Activated CD4-positive, alpha-beta T cell treated with anti-CD3 and anti-CD28 coated beads, Interleukin-2, amount 10 ng/mL, durations not matched to agents 24 days and 14 days (primary cell): ENCODE measurements at regions of chr19 and their contacts with region 1.

Region 1: DNA sequence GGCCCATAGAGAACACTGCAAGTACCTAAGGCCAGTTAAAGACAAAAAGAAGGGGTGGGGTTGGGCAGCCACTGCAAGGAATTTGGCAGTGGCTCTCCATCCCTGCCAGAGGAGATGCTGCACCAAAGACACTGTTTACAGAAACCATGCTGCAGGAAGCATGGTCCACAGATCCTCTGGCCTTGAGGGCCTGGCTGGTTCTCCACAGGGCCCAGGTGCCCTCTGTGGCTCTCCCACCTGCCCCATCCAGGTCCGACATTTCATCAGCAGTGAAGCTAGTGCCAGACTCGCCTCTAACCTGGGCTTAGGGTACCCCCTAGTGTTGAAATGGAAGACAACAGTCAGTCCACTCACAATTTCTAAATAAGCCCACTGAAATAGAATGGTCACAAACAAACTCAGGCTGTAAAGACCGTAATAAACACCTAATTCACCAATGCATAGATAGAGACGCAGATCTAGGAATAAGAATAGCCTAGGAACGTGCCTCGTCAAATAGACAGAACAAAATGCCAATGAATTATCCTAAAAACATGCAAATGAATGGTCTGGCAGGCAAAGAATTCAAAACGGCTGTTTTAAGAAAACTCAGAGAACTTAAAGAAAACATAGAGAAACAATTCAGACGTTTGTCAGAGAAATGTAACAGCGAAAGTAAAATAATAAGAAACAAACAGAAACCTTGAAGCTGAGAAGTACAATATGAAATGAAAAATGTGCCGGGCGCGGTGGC is 23.3 kb downstream of the LYPD4 start:
- DNase-seq: peak; percentile 90
- H3K4me3 Mint-ChIP-seq: no peak overlapping the region
- H3K27ac Mint-ChIP-seq: no peak overlapping the region
- H3K4me1 Mint-ChIP-seq: no peaks in the 10 kb centered on the region
- H3K27me3 Mint-ChIP-seq: peaks cover 35% of the 10 kb centered on the region

Region 2: DNA sequence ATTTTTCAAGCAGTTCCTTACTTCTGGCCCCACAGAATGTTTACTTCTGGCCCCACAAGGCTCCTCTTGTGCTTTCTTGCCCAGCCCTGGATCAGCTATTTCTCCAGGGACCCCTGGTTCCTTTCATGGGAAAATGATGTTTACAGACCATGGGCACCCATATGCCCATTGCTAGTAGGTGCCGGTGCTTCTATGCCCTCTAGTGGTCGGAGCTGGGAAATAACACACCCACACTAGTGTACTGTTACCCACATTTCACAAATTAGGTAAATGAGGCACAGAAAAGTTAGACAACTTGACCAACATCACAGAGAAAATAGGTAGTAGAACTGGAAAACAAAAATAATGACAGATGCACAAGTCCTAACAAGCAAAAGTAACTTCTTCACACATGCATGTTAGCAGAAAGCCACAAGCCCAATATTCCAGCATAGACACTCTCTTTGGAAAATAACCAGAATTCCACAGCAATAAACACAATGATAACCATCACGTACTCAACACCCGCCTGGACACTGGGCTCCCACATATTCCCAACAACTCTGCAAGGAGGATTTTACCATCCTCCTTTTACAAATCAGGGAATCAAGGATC is 67.1 kb before region 1 on chr19:
- intact Hi-C with region 1: loop called (anchors 2 kb)
- DNase-seq: peak; percentile 90
- H3K4me3 Mint-ChIP-seq: no peak overlapping the region
- H3K27ac Mint-ChIP-seq: no peak overlapping the region
- H3K4me1 Mint-ChIP-seq: peaks cover 6% of the 10 kb centered on the region
- H3K27me3 Mint-ChIP-seq: peaks cover 50% of the 10 kb centered on the region

Region 3: DNA sequence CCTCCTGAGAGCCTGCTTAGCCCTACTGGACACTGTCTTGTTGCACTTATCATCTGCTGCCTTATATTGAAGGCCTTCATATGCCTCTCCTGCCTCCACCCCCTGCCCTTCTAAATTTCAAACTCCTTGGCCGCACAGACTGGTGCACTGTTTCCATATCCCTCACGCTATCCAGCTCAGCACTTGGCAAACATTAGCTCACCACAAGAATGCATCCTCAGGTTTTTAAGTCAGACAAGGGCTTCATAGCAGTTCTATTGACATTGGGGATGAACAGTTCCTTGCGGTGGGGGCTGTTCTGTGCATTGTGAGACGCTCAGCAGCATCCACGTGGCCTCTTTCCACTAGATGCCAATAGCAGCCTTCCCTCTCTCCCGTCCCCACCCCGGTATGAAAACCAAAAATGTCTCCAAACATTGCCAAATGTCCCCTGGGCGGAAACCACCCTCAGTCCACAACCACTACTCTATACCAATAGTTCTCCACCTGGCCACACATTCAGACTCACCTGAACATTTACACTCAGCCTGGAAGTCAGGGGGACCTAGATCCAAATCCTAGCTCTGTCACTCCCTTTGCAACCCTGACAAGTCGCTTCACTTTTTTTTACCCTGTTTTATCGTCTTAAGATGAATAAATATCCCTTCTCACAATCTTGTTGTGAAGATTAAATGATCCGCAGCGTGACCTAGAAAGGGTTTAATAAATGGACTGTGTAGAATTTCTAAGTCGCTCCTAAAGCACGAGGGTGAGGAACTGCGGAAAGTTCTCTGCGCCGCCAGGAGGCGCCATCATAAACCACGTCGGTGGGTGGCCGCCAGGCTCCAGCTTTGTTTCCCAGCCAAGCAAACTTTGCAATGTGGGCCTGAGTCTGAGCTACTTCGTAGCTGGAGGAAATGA is 28.4 kb before region 1 on chr19:
- intact Hi-C with region 1: loop called (anchors 1 kb)
- DNase-seq: peak; percentile 89
- H3K4me3 Mint-ChIP-seq: no peak overlapping the region
- H3K27ac Mint-ChIP-seq: no peak overlapping the region
- H3K4me1 Mint-ChIP-seq: peaks cover 7% of the 10 kb centered on the region
- H3K27me3 Mint-ChIP-seq: peaks cover 52% of the 10 kb centered on the region

Region 4: DNA sequence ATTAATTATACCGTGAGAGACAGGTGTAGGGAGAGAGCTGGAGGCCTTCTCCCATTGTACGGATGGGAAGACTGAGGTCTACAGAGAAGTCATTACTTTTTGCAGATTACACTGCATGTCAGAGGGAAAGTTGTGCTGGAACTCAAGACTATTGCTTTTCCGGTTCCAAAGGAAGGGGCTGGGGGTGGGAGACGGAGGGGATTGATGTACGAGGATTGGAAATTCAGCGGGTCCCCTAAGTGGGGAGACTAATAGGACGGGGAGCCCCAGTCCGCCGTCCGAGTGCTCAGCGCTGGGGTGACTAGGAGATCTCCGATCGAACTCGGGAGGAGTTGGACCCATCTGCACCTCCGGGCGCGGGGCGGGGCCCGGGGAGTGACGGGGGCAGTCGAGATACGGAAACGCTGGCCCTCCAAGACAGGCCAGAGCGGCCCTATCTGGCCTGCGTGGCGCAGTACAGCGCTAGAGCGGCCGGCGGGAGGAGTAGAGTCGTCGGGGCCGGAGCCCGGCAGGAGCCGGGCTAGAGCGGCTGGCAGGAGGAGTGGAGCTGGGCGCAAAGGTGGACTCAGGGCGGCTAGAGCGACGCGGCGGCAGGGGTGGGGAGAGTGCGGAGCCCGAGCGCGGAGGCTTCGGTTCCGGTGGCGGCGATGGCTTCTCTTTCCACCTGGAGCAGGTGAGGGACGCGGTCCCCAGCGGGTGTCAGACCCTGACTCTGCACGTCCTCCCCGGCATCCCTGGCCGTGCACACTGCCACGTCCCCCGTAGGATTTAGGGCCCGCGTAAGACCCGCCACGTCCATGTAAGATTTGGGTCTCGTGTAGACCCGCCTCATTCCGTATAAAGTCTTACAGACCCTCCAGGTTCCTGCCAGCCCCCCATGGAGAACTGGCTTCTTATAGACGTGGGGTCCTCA is 62.9 kb after region 1 on chr19:
- intact Hi-C with region 1: no loop called
- DNase-seq: peak; percentile 97
- H3K4me3 Mint-ChIP-seq: peak overlapping the region; percentile 83
- H3K27ac Mint-ChIP-seq: peak overlapping the region; percentile 94
- H3K4me1 Mint-ChIP-seq: peaks cover 50% of the 10 kb centered on the region
- H3K27me3 Mint-ChIP-seq: no peaks in the 10 kb centered on the region